ENCODE measurements at regions of chr4 and their contacts with region 1.

Region 1: GRCh38 chr4:53908661-53909078 is 155.7 kb downstream of the CHIC2 start:
- DNase-seq: no peak
- ATAC-seq: peak; percentile 87 to 92

Region 2: DNA sequence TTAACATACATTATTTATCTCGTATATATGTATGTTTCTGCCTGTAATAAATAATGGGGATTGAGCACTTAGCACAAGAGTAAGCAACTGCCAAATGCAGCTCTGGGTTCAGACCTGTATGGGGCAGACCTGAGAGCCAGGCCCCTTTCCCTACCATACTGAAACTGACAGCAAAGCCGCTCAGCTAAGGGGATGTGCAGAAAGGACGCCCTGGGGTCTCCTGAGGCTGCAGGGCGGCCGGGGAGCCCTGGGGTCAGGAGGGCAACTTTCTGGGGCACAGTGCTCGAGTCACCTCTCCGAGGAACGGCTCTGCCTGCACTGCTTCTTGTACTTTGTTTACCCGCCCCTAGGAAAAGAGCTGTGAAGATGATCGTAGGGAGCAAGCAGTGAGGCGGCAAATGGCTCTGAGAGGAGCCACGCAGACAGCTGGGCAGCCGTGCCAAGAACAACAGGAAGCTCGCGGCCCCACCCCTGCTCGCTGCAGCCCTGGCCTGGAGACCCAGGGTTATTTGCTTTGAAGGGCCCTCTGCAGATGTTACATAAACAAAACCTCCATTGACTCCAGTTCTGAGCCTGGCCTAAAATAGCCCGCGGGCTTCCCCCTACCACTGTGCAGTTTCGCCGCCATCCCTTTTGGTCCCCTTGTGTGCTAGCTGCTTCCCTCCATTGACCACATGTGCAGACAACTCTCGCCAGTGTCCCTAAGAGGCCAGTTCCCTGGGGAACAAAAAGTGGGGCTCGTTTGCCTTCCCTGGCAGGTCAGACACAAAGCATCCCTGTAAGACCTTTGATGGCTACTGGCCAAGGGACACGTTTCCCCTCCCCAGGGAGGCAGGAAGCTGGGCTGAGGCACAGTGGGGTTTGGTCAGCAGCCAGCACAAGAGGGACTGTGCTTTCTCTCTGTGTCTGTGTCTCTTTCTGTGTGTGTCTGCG is 206.1 kb before region 1 on chr4:
- intact Hi-C with region 1: loop called in 1 of 2 experiments (anchors 10 kb)
- DNase-seq: peak; percentile 91
- ATAC-seq: peak; percentile 92 to 97